OCI-LY7 (cell line): ENCODE measurements at regions of chr12 and their contacts with region 1.

Region 1: GRCh38 chr12:32126720-32127119 is 20.1 kb downstream of the BICD1 start:
- DNase-seq: no peak
- H3K4me3 ChIP-seq: no peak overlapping the region
- H3K27ac ChIP-seq: no peak overlapping the region
- H3K4me1 ChIP-seq: peaks cover 25% of the 10 kb centered on the region
- CTCF ChIP-seq: no peak

Region 2: GRCh38 chr12:32115404-32116104 is 11.2 kb before region 1 on chr12:
- CTCF ChIA-PET with region 1: no interaction called
- POLR2A ChIA-PET with region 1: interaction called, 15 read pairs
- intact Hi-C with region 1: no loop called
- DNase-seq: peak; percentile 35
- H3K4me3 ChIP-seq: peak overlapping the region; percentile 25
- H3K27ac ChIP-seq: peak overlapping the region; percentile 20
- H3K4me1 ChIP-seq: peaks cover 56% of the 10 kb centered on the region
- CTCF ChIP-seq: no peak

Region 3: GRCh38 chr12:32217354-32218310 is 90.9 kb after region 1 on chr12:
- CTCF ChIA-PET with region 1: no interaction called
- POLR2A ChIA-PET with region 1: no interaction called
- intact Hi-C with region 1: no loop called
- DNase-seq: peak; percentile 12
- H3K4me3 ChIP-seq: no peak overlapping the region
- H3K27ac ChIP-seq: peak overlapping the region; percentile 10
- H3K4me1 ChIP-seq: peaks cover 44% of the 10 kb centered on the region
- CTCF ChIP-seq: no peak